ENCODE measurements at regions of chr6 and their contacts with region 1.

Region 1: GRCh38 chr6:126804332-126805064 is 314.0 kb upstream of the RSPO3 start:
- DNase-seq: no peak
- H3K4me3 ChIP-seq: no peak overlapping the region
- H3K27ac ChIP-seq: no peak overlapping the region
- H3K4me1 ChIP-seq: no peaks in the 10 kb centered on the region
- H3K27me3 ChIP-seq: no peaks in the 10 kb centered on the region
- CTCF ChIP-seq: peak; percentile 39 to 64 (median 57)
- EP300 ChIP-seq: no peak
- POLR2A ChIP-seq: no peak

Region 2: GRCh38 chr6:126657561-126658175 is 146.8 kb before region 1 on chr6:
- in situ Hi-C with region 1: no loop called
- intact Hi-C with region 1: no loop called
- DNase-seq: peak; percentile 11
- H3K4me3 ChIP-seq: no peak overlapping the region
- H3K27ac ChIP-seq: no peak overlapping the region
- H3K4me1 ChIP-seq: no peaks in the 10 kb centered on the region
- H3K27me3 ChIP-seq: no peaks in the 10 kb centered on the region
- CTCF ChIP-seq: peak; percentile 34 to 60 (median 58)
- EP300 ChIP-seq: no peak
- POLR2A ChIP-seq: no peak

Region 3: DNA sequence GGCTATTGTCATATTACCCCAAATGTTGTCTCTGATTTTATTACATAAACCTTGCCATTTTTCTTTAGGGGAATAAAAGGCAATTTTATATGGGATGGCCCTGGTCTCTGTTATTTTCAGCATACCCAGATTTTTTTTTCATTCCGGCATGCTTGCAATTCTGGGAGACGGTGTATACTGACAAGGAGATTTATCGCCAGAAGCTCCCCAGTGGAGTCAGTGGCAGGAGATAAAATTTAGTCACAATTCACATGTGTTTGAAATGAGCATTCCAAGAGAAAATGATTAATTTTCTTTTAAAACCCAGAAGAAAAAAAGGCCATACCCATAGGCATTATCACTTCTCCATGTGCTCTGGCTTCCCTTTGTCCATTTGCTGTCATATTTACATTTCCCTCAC is 63.1 kb after region 1 on chr6:
- in situ Hi-C with region 1: no loop called
- intact Hi-C with region 1: loop called (anchors 10 kb)
- DNase-seq: no peak
- H3K4me3 ChIP-seq: no peak overlapping the region
- H3K27ac ChIP-seq: no peak overlapping the region
- H3K4me1 ChIP-seq: no peaks in the 10 kb centered on the region
- H3K27me3 ChIP-seq: no peaks in the 10 kb centered on the region
- CTCF ChIP-seq: no peak
- EP300 ChIP-seq: no peak
- POLR2A ChIP-seq: no peak

Region 4: DNA sequence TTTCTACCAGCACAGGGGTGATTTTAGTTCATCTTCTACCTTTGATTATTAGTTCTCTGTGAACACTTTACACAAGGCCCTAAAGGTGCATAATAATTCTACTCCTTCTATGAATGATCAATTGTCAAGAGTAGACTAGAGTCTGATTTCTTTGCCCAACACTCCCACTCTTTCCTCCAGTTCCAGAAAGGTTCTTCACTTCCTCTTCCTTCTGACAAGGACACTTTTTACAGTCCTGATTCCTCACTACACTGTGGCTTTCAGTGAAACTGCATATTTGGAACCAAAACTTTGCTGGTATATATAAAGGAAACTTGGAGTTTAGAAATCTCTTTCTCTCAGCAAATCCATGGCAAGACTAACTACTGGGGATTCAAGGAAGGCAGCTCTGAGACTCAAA is 303.4 kb after region 1 on chr6:
- in situ Hi-C with region 1: no loop called
- intact Hi-C with region 1: no loop called
- DNase-seq: no peak
- H3K4me3 ChIP-seq: no peak overlapping the region
- H3K27ac ChIP-seq: no peak overlapping the region
- H3K4me1 ChIP-seq: no peaks in the 10 kb centered on the region
- H3K27me3 ChIP-seq: no peaks in the 10 kb centered on the region
- CTCF ChIP-seq: no peak
- EP300 ChIP-seq: no peak
- POLR2A ChIP-seq: no peak

Region 5: DNA sequence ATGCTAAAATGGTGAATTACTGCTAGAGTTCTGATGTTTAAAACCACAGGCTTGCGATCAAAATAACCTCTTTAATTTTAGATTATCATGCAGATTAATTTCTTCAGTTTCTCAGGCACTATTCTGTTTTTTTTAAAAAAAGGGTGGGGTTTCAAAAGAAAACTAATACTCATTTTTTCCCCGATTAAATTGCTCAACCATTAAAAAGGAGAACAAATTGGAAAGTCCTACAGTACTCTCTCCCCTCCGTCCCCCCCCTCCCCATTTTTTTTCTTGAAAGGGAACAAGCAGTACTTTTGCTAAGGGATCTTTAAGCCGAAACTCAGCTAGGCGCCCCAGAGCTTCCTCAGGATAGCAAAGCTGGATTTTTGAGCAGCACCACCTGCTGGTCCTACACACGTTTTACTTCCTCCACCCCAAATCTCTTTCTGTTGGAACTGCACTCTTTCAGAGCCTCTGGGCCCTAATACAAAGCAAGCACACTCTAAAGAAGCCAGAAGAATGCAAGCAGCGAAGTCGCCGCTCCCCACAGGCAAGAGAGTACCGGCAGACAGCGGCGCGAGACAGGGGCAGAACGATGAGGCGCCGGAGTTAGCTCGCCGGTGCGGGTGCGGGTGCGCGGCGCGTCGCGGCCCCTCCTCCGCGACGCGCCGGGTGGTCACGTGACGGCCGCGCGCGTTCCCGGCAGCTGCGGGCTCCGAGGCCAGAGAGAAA is 461.8 kb after region 1 on chr6 and contains the start of gene RNF146:
- in situ Hi-C with region 1: no loop called
- intact Hi-C with region 1: loop called (anchors 10 kb)
- DNase-seq: peak; percentile 85
- H3K4me3 ChIP-seq: peak within 1 kb of the TSS; percentile 74 to 94 (median 86)
- H3K27ac ChIP-seq: peak within 1 kb of the TSS; percentile 95 to 97 (median 96)
- H3K4me1 ChIP-seq: peaks cover 5 to 34% (median 19%) of the 10 kb centered on the region in 4 donors
- H3K27me3 ChIP-seq: no peaks in the 10 kb centered on the region
- CTCF ChIP-seq: peak; percentile 70 to 84 (median 74)
- EP300 ChIP-seq: no peak
- POLR2A ChIP-seq: no peak
- total RNA-seq, gene RNF146: 10.3 to 58.1 (median 29.0) TPM